ENCODE measurements at regions of chr14 and their contacts with region 1.

Region 1: DNA sequence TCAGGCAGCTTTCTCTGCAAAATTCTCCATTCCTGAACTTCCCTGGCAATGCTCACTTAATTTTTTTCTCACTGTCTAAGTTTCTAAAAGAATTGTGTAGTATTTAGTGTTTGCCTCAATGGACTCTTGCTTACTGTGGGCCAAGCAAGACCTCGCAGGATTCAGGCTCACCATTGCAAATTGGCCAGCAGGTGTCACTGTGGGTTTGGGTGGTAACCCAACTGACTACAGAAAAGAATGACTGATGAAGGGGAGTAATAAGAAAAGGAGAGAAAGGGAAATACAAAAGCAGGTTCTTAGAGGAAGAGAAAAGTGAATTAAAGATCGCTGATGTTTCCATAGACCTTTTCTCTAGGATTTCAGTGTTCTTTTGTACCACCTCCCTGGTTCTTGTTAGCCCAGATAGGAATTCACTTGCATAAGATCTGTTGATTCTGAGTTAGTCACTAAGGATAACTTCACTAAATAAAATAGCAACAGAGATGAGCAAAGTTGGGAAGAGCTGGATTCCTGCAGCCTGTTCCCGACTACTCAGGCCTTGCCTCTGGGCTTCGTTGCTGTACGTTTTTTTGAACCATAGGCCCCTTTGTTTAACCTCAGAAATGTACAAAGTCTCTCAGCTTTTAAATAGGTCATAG is 386.5 kb upstream of the DDHD1 start:
- DNase-seq: peak; percentile 69 to 91 (median 79)
- H3K4me3 ChIP-seq: no peak overlapping the region
- H3K27ac ChIP-seq: no peak overlapping the region
- H3K4me1 ChIP-seq: peaks cover 0 to 4% of the 10 kb centered on the region in 2 donors
- H3K27me3 ChIP-seq: no peaks in the 10 kb centered on the region
- CTCF ChIP-seq: peak; percentile 72 to 88 (median 82)
- POLR2A ChIP-seq: no peak

Region 2: DNA sequence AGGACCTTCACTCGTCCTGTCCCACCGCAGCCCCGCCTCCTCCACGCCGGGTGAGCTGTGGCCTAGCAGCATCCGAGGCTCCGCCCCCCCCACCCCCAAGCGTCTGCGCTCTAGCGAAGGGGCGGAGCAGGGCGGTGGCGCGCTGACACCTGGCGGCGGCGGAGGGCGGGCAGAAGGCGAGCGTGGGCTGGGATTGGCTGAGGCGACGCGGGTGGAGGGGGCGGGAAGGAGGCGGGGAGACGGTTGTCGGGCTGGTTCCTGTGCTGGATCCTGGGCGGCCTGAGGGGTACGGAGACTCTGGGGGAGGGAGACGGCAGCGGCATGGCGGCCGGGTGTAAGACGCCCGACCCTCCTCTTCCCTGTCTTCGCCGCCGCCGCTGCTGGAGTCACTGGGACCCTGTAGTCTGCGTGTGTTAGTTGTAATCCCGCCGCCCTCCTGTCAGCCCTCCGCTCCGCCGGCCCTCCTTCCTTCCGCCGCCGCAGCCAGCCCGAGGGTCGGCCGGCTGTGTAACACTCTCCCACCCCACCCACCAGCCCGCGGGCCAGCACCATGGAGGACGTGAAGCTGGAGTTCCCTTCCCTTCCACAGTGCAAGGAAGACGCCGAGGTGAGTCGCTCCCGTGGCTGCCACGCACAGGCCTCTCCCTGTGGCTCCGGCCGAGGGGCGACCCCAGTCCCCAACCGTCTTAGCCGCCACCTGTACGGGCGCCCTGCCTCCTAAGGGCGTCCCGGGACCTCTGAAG is 809.5 kb before region 1 on chr14 and contains the start of gene STYX:
- intact Hi-C with region 1: no loop called
- DNase-seq: peak; percentile 97 to 100 (median 99)
- H3K4me3 ChIP-seq: peak within 1 kb of the TSS; percentile 38 to 99 (median 76)
- H3K27ac ChIP-seq: peak within 1 kb of the TSS in 4 of 5 donors; percentile 59 to 90 (median 75)
- H3K4me1 ChIP-seq: peaks cover 4 to 9% of the 10 kb centered on the region in 2 donors
- H3K27me3 ChIP-seq: no peaks in the 10 kb centered on the region
- CTCF ChIP-seq: peak in 5 of 6 experiments; percentile 29 to 57 (median 40)
- POLR2A ChIP-seq: peak; percentile 21 to 83
- total RNA-seq, gene STYX: 3.7 to 13.0 (median 6.5) TPM

Region 3: GRCh38 chr14:53696217-53696965 is 156.8 kb after region 1 on chr14:
- intact Hi-C with region 1: no loop called
- DNase-seq: no peak
- H3K4me3 ChIP-seq: no peak overlapping the region
- H3K27ac ChIP-seq: no peak overlapping the region
- H3K4me1 ChIP-seq: no peaks in the 10 kb centered on the region
- H3K27me3 ChIP-seq: no peaks in the 10 kb centered on the region
- CTCF ChIP-seq: no peak
- POLR2A ChIP-seq: no peak

Region 4: DNA sequence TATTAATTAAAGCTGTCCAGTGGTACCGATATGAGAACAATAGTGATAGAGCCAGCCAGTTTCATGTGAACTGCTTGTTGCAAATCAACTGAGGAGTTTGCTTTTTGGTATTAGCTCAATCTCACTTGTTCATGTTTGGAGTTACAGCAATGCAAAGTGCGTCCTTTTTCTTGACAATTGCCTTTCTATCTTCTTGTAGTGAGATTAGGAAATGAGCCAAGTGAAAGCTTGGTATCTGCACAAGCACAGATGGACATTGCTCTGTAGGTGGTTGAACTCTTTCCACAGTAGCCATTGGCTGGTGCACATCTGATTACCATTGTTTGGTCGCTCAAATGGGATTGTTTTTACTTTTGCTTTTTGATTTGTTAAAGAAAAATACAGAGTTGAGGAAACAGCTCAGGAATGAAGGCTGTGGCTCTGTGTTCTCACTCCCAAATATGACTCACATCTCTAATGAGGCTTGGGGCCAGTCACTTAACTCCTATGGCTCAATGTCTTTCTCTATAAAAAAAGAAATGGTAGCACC is 175.6 kb after region 1 on chr14:
- intact Hi-C with region 1: no loop called
- DNase-seq: peak in 5 of 7 donors; percentile 10 to 24 (median 21)
- H3K4me3 ChIP-seq: peak overlapping the region in 2 of 4 donors; percentile 2 to 40
- H3K27ac ChIP-seq: peak overlapping the region in 1 of 5 donors; percentile 24
- H3K4me1 ChIP-seq: peaks cover 13 to 20% of the 10 kb centered on the region in 2 donors
- H3K27me3 ChIP-seq: no peaks in the 10 kb centered on the region
- CTCF ChIP-seq: no peak
- POLR2A ChIP-seq: no peak

Region 5: GRCh38 chr14:54347997-54348611 is 808.5 kb after region 1 on chr14:
- intact Hi-C with region 1: loop called in 1 of 2 experiments (anchors 5 kb)
- DNase-seq: peak in 1 of 7 donors; percentile 14
- H3K4me3 ChIP-seq: no peak overlapping the region
- H3K27ac ChIP-seq: no peak overlapping the region
- H3K4me1 ChIP-seq: no peaks in the 10 kb centered on the region
- H3K27me3 ChIP-seq: no peaks in the 10 kb centered on the region
- CTCF ChIP-seq: peak; percentile 64 to 81 (median 74)
- POLR2A ChIP-seq: no peak

Measured in adrenal gland (tissue), 19 donors.